PC-9 (cell line): ENCODE measurements at regions of chr15 and their contacts with region 1.

Region 1: DNA sequence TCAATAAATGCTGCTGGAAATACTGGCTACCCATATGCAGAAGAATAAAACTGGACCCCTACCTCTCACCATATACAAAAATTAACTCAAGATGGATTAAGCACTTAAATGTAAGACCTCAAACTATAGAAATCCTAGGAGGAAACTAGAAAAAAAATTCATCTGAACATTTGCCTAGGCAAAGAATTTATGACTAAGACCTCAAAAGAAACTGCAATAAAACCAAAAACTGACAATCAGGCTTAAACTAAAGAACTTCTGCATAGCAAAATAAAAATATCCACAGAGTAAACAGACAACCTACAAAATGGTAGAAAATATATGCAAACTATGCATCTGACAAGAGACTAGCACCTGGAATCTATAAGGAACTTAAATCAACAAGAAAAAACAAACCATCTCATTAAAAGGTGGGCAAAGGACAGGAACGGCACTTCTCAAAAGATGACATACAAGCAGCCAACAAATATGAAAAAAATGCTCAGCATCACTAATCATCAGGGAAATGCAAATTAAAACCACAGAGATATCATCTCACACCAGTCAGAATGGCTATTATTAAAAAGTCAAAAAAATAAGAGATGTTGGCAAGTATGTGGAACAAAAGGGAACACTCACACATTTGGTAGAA is 47.0 kb downstream of the MYO9A start:
- DNase-seq: no peak
- H3K4me3 ChIP-seq: no peak overlapping the region
- H3K27ac ChIP-seq: no peak overlapping the region
- H3K4me1 ChIP-seq: no peaks in the 10 kb centered on the region
- H3K27me3 ChIP-seq: no peaks in the 10 kb centered on the region
- CTCF ChIP-seq: no peak

Region 2: GRCh38 chr15:70880781-70881180 is 1190.2 kb before region 1 on chr15:
- CTCF ChIA-PET with region 1: no interaction called
- POLR2A ChIA-PET with region 1: interaction called, 11 read pairs
- intact Hi-C with region 1: no loop called
- DNase-seq: no peak
- H3K4me3 ChIP-seq: no peak overlapping the region
- H3K27ac ChIP-seq: no peak overlapping the region
- H3K4me1 ChIP-seq: no peaks in the 10 kb centered on the region
- H3K27me3 ChIP-seq: no peaks in the 10 kb centered on the region
- CTCF ChIP-seq: no peak

Region 3: DNA sequence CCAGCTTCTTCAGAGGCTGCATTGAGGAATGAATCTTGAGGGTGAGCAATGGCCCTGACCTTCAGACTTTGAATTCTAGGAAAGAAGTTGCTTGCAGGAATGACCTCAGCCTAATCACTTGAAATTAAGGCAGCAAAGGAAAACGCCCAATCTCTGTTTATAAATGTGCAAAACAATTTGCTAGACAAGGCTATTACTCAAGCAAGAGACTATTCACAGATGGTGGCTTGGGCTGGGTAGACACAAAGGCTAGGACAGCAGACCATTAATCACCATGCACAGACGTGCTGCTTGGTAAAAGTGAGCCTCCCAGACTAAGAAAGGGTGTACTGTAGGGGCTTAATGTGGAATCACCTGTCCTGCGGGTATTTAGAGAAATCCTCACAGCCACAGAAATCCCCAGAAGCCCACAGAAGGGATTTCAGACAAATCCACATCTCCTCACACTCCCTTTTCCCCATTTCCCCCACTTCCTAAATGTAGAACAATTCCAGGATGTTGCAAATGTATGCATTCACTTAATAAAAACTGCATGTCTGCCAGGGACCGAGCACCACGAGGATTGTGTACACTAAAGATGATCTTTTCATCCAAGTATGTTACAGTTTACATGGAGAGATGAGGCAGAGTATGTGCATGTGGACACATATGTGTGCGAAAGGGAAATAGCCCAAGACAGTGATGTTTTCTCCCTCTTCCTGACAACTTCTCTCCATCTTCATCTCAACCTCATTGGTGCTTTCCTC is 696.2 kb before region 1 on chr15:
- CTCF ChIA-PET with region 1: no interaction called
- POLR2A ChIA-PET with region 1: no interaction called
- intact Hi-C with region 1: no loop called
- DNase-seq: no peak
- H3K4me3 ChIP-seq: no peak overlapping the region
- H3K27ac ChIP-seq: no peak overlapping the region
- H3K4me1 ChIP-seq: no peaks in the 10 kb centered on the region
- H3K27me3 ChIP-seq: no peaks in the 10 kb centered on the region
- CTCF ChIP-seq: no peak

Region 4: DNA sequence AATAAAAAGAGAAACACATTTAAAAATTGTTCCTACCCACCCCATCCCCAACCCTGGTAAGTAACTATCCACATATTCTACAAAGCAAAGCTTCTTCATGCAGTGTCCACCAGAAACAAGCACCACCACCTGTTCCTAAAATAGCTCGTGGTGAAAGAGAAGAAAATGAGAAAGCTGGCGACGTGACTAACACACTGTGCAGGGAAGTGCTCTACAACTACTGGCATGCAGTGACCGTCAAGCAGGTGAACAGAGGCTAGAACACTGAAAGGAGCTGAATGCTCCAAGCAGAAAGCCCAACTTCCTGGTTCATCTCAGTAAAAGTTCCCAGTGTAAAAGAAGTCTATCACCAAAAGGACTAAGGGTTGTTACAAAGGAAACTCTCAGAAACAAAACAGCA is 179.9 kb before region 1 on chr15:
- CTCF ChIA-PET with region 1: no interaction called
- POLR2A ChIA-PET with region 1: no interaction called
- intact Hi-C with region 1: no loop called
- DNase-seq: no peak
- H3K4me3 ChIP-seq: no peak overlapping the region
- H3K27ac ChIP-seq: no peak overlapping the region
- H3K4me1 ChIP-seq: no peaks in the 10 kb centered on the region
- H3K27me3 ChIP-seq: no peaks in the 10 kb centered on the region
- CTCF ChIP-seq: no peak